ENCODE measurements at regions of chrX and their contacts with region 1.

Region 1: GRCh38 chrX:19659925-19660324 is 144.6 kb upstream of the MAP3K15 start:
- DNase-seq: no peak
- ATAC-seq: no peak
- H3K4me3 ChIP-seq: no peak overlapping the region
- H3K27ac ChIP-seq: no peak overlapping the region
- H3K4me1 ChIP-seq: peaks cover 5% of the 10 kb centered on the region
- H3K27me3 ChIP-seq: no peaks in the 10 kb centered on the region
- CTCF ChIP-seq: no peak

Region 2: DNA sequence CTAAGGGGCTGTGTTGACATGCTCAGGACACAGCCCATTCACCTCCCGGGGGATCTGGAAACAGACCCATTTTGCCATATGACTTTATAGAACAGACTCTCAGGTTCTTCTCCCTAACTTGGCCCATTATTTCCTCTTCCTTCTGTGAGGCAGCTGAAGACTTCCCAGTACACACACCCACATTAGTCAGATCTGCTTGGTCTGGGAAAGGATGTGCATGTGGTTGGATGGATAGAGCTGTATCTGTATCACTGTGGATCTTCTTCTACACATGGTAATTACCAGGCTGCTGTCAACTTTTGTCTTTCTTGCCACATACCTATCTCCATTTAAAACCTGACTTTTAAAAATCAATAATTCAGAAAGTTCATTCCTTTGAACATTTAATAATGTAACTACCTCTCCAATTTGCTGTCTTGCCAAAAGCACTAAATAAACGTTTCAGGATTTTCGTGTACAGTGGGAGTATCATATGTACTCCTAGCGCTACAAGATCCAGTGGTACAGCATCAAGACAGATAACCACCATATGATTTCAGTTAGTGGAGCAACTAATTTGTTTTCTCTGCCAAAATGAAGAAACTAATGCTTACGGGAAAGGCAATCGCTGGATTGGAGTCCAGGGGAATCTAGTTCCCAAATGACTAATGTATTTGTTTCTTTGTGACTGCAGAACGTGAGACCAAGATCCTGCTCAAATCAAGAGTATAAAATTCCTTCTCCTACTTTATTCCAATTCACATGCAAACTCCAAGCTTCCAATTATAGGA is 10.5 kb before region 1 on chrX:
- CTCF ChIA-PET with region 1: no interaction called
- POLR2A ChIA-PET with region 1: interaction called, 14 read pairs
- in situ Hi-C with region 1: no loop called
- intact Hi-C with region 1: no loop called
- DNase-seq: no peak
- ATAC-seq: no peak
- H3K4me3 ChIP-seq: no peak overlapping the region
- H3K27ac ChIP-seq: no peak overlapping the region
- H3K4me1 ChIP-seq: no peaks in the 10 kb centered on the region
- H3K27me3 ChIP-seq: no peaks in the 10 kb centered on the region
- CTCF ChIP-seq: no peak

Measured in Panc1 (cell line).